Naive thymus-derived CD8-positive, alpha-beta T cell (primary cell): ENCODE measurements at regions of chr6 and their contacts with region 1.

Region 1: DNA sequence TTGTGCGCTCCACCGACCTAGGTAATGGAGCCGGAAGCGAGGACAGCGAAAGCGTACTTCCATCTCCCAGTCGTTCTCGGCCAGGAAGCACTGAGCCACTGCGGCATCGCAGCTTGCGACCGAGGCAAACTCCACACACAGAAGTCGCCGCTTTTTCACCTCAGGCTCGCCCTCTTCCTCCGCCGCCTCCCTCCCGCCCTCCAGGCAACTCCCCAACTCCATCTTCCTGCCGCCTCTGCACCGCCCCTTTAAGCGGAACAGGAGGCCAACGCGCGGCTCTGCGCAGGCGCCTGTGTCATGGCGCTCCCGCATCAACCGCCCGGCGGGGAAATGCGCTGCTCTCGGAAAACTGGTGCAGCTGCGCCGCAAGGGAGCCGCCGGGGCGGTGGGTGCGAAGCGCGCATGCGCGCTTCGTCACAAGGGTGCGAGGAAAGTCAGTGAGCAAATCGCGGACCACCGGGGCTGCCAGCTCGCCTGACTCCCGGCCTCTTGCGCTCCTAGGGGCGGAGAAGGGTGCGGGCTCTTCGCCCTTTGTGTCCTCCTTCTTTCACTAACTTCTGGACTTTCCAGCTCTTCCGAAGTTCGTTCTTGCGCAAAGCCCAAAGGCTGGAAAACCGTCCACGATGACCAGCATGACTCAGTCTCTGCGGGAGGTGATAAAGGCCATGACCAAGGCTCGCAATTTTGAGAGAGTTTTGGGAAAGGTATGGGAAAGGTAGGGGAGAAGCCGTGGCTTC is at the starts of genes ACOT13 and TDP2:
- DNase-seq: peak; percentile 93 to 97 (median 96)
- ATAC-seq: peak; percentile 91
- H3K4me3 Mint-ChIP-seq: peak within 1 kb of the TSS; percentile 87 to 100 (median 99)
- H3K27ac Mint-ChIP-seq: peak within 1 kb of the TSS; percentile 96 to 100 (median 99)
- H3K4me1 Mint-ChIP-seq: peaks cover 34 to 64% (median 62%) of the 10 kb centered on the region in 4 donors
- H3K27me3 Mint-ChIP-seq: no peaks in the 10 kb centered on the region
- polyA plus RNA-seq, gene ACOT13: 16.5 to 19.0 (median 16.5) TPM
- polyA plus RNA-seq, gene TDP2: 37.9 to 49.1 (median 44.5) TPM

Region 2: DNA sequence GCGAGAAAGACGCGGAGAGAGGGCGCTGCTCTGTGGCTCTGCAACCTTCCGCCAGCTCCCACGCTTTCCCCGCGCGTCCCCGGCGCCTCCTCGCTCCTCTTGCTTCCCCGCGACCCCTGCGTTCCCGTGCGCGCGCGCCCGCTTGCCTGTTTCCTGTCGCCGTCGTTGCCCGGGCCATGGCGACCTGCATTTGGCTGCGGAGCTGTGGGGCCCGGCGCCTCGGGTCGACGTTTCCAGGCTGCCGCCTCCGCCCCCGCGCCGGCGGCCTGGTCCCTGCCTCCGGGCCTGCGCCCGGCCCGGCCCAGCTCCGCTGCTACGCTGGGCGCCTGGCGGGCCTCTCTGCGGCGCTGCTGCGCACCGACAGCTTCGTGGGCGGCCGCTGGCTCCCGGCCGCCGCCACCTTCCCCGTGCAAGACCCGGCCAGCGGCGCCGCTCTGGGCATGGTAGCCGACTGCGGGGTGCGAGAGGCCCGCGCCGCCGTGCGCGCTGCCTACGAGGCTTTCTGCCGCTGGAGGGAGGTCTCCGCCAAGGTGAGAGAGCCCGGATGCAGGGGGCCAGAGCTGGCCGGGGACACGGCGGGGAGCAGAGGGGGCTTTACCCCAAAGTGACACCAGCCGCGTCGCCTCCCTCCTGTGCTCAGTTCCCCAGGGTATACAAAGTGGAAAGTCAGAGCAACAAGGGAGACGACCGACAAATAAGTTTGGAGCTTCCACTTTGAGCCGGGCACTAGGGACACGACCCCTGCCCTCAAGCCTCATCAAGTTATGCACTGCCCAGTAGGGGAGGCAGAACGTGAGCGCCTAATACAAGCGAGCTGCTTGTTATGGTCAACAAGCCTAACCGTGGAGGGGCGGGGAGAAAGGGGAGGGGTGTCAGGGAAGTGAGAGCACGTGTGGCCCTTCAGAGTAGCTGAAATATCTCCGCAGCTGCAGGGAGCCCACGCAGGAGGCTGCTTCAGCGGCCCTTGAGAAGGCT is 171.7 kb before region 1 on chr6 and contains the start of gene ALDH5A1:
- POLR2A ChIA-PET with region 1: interaction called, 10 read pairs
- DNase-seq: peak; percentile 68 to 92 (median 81)
- ATAC-seq: peak; percentile 79 to 81
- H3K4me3 Mint-ChIP-seq: peak within 1 kb of the TSS; percentile 83 to 94 (median 90)
- H3K27ac Mint-ChIP-seq: peak within 1 kb of the TSS; percentile 80 to 94 (median 87)
- H3K4me1 Mint-ChIP-seq: peaks cover 19 to 54% (median 41%) of the 10 kb centered on the region in 4 donors
- H3K27me3 Mint-ChIP-seq: no peaks in the 10 kb centered on the region
- polyA plus RNA-seq, gene ALDH5A1: 14.0 to 24.8 (median 15.8) TPM

Region 3: DNA sequence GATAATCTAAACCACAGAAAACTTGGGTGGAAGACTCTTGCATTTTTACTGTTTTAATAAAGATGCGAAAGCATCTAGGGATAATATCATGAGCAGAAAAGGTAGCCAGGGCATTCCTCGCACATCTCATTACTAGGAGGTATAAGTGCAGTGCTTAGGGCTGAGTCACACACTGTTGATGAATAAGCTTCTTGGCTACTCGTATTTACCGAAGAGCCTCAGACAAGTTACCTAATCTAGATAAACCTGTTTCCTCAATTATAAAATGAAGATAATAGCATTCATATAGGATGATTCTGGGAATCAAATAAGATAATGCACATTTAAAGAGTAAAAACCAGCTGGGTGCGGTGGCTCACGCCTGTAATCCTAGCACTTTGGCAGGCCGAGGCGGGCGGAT is 20.0 kb before region 1 on chr6:
- POLR2A ChIA-PET with region 1: interaction called, 12 read pairs
- DNase-seq: no peak
- ATAC-seq: no peak
- H3K4me3 Mint-ChIP-seq: peak overlapping the region; percentile 80 to 94 (median 90)
- H3K27ac Mint-ChIP-seq: peak overlapping the region in 4 of 10 donors; percentile 77 to 92 (median 80)
- H3K4me1 Mint-ChIP-seq: peaks cover 8 to 17% (median 14%) of the 10 kb centered on the region in 4 donors
- H3K27me3 Mint-ChIP-seq: peaks cover 0 to 20% (median 12%) of the 10 kb centered on the region in 5 donors

Region 4: DNA sequence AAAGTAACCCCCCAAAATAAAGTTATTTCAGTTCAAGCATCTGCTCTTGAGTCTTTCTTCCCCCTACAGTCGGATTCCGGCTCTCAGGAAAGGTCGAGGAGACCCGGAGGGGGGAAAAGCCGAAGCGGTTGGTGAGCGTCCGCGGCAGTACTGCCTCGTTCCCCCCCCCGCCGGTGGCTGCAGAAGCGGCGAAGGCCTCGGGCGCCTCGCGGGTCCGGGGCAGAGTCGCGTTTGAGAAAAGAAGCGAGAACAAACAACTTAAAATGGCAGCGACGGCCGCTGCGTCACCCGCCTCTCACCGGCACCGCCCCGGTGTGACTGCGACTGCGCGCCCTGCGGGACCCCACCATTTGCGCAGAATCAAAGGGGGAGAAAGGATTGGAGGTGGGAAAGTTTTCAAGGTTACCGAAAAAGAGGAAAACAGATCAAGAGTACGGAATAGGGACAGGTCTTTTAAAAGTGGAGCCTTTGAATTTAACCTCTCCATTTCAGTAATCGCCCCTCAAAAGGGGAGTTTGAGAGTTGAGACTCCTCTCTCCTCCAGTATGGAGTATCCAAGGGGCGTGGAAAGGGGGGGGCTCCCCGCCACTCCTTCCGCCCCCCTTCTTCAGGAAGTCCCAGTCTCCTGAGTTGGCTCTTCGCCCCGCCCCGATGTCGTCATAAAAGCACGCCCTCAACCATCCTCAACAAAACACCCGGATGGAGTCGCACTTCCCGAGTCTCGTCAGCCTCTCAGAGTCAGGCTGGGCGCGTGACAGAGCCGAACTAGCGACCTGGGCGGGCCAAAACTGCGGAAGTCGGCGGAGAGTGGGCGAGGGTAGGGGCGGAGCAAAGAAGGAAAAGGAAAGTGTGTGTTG is 54.0 kb after region 1 on chr6:
- POLR2A ChIA-PET with region 1: interaction called, 22 read pairs
- DNase-seq: peak; percentile 95 to 100 (median 100)
- ATAC-seq: peak; percentile 85 to 87
- H3K4me3 Mint-ChIP-seq: peak overlapping the region; percentile 90 to 100 (median 96)
- H3K27ac Mint-ChIP-seq: peak overlapping the region; percentile 96 to 100 (median 99)
- H3K4me1 Mint-ChIP-seq: peaks cover 20 to 50% (median 39%) of the 10 kb centered on the region in 4 donors
- H3K27me3 Mint-ChIP-seq: no peaks in the 10 kb centered on the region